Common myeloid progenitor, CD34-positive (primary cell): ENCODE measurements at regions of chr1 and their contacts with region 1.

Region 1: GRCh38 chr1:109099938-109100773 is 9.6 kb downstream of the TMEM167B start:
- DNase-seq: peak; percentile 99
- H3K4me3 ChIP-seq: peak overlapping the region; percentile 70 to 89 (median 79)
- H3K27ac ChIP-seq: peak overlapping the region; percentile 74 to 91
- H3K4me1 ChIP-seq: peaks cover 0 to 17% (median 5%) of the 10 kb centered on the region in 4 experiments
- H3K27me3 ChIP-seq: no peaks in the 10 kb centered on the region

Region 2: DNA sequence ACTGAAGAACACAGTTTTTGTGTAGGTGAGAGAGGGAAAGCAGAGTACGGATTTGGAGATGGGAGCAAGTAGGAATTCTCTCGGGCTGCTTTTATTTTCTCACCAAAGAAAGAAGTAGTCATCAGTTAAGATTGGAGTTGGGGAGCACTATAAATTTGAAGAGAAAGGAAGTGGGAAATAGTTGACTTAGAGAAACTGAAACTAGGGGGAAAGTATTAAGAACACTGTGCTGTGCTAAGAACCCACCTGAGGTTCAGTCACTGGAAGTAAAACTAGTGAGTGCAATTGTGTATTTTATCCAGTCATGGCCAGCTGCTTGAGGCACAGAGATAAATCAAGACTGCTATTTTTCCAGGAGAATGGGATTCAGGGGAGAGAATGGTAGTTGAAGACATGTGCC is 174.2 kb before region 1 on chr1:
- CTCF ChIA-PET with region 1: no interaction called
- POLR2A ChIA-PET with region 1: no interaction called
- DNase-seq: no peak
- H3K4me3 ChIP-seq: no peak overlapping the region
- H3K27ac ChIP-seq: peak overlapping the region in 1 of 2 experiments; percentile 18
- H3K4me1 ChIP-seq: no peaks in the 10 kb centered on the region
- H3K27me3 ChIP-seq: no peaks in the 10 kb centered on the region

Region 3: DNA sequence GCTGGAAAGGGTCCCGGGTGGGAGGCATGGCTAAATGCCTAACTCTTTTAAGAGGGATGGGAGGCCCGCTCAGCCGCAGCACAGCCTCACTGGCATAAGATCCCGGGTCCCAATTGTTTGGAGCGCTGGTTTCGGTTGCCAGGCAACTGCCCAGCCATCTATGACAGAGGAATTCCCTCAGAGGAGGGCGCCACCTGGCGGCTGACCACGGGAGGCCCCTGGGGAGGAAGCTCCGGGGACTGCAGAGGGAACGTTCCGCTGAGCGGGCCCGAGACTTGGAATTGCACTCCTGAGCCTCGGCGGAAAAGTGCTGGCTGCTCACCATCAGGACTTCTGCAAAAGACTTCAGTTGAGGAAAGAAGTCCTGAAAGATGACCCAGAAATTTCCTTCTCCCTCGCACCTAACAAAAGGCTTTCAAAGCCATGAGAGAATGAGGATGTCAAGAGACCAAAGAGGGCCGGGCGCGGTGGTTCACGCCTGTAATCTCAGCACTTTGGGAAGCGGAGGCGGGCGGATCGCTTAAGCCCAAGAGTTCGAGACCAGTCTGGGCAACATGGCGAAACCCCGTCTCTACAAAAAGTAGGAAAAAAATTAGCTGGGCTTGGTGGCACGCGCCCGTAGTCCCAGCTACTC is 12.6 kb after region 1 on chr1:
- CTCF ChIA-PET with region 1: interaction called, 42 read pairs
- POLR2A ChIA-PET with region 1: interaction called, 4 read pairs
- DNase-seq: peak; percentile 85 to 89 (median 87)
- H3K4me3 ChIP-seq: peak overlapping the region in 5 of 7 experiments; percentile 16 to 69 (median 39)
- H3K27ac ChIP-seq: no peak overlapping the region
- H3K4me1 ChIP-seq: peaks cover 0 to 24% (median 22%) of the 10 kb centered on the region in 4 experiments
- H3K27me3 ChIP-seq: peaks cover 13 to 74% (median 31%) of the 10 kb centered on the region in 5 experiments

Region 4: GRCh38 chr1:109142260-109142659 is 42.1 kb after region 1 on chr1:
- CTCF ChIA-PET with region 1: no interaction called
- POLR2A ChIA-PET with region 1: no interaction called
- DNase-seq: no peak
- H3K4me3 ChIP-seq: no peak overlapping the region
- H3K27ac ChIP-seq: no peak overlapping the region
- H3K4me1 ChIP-seq: no peaks in the 10 kb centered on the region
- H3K27me3 ChIP-seq: peaks cover 0 to 10% (median 0%) of the 10 kb centered on the region in 5 experiments

Region 5: DNA sequence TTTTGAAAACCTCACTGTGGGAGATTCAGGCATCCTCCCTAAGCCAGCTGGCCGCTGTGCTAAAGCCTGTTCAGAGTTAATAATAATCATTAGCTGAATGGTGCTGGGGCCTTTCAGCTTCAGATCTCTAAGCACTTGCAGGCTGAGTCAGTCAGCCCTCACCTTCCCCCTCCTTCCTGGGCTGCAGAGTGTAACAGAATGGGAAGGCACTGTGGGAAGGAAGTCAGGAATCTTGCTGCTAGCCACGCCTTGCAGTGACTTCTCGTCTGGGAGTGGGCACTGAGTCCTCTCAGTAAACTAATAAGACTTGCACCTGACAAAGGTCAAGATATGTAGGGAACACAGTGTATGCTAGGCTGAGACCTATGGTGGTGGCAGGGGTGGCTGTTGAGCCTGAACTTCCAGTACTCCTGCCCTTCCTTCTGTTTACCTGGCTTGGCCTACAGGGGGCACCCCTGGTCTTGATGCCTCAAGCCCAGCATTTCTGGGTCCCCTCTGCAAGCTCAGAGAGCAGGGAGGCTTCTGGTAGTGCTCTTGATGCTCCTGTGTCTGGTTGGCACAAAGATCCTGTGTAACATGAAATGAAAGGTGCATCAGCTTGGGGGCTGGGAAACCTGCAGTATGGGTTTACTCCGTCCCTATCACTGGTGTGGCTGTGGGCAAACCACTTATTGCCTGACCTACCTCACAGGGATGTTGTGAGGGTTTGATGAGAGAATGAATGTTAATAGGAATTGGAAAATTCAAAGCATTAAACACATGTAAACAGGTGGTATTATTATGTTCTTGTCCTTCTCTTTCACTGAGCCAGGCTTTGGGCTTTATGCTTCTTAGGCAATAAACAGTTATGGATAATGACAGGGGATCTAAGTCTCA is 399.7 kb after region 1 on chr1:
- CTCF ChIA-PET with region 1: no interaction called
- POLR2A ChIA-PET with region 1: no interaction called
- DNase-seq: peak; percentile 44 to 71 (median 62)
- H3K4me3 ChIP-seq: no peak overlapping the region
- H3K27ac ChIP-seq: no peak overlapping the region
- H3K4me1 ChIP-seq: peaks cover 0 to 26% (median 15%) of the 10 kb centered on the region in 4 experiments
- H3K27me3 ChIP-seq: no peaks in the 10 kb centered on the region